ENCODE measurements at regions of chr12 and their contacts with region 1.

Region 1: GRCh38 chr12:26239122-26239851 is 43.9 kb downstream of the SSPN start:
- DNase-seq: peak; percentile 95

Region 2: DNA sequence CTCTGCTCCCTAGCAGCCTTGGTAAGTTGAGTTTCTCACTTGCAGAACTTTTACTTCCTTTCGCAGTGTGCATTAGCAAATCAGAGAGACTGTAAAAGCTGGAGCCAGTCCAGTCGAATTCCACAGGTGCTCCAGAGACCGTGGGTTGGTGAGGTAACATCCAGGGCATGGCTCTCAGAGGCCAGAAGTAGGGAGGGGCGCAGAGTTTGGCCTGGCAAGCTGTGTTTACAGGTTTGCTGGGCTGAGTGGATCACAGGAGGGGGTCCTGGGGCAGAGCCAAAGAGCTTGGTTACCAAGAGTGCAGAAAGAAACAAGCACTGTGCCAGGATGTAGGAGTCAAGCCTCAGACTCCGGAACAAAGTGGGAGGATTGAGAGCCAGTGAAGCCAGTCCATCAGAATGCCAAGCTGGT is 104.3 kb before region 1 on chr12:
- intact Hi-C with region 1: loop called in 1 of 2 experiments (anchors 5 kb)
- DNase-seq: no peak

Measured in posterior vena cava (tissue), 2 donors.